Head of caudate nucleus (tissue), 42 donors: ENCODE measurements at regions of chr10 and their contacts with region 1.

Region 1: GRCh38 chr10:124530215-124530665 is 68.6 kb downstream of the LHPP start:
- DNase-seq: peak; percentile 82 to 96 (median 90)

Region 2: DNA sequence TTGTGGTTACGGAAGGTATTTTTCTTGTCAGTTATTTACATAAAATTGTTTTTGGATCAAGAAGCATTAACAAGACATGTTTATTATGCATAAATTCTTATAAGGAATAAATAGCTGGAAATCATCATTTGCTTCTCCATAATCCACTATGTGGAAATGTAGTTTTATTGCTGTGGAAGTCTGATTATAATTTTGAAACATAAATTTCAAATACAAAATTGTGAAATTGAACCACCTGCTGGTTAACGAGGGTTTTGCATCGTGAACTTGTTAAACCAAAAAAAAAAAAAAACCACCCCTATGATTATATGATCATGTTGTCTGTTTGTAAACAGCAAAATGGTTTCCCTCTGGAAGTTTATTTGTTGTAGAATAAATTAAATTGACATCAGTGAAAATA is 297.2 kb after region 1 on chr10:
- intact Hi-C with region 1: loop called (anchors 10 kb)
- DNase-seq: peak in 4 of 42 donors; percentile 10 to 65 (median 22)